HepG2 (cell line): ENCODE measurements at regions of chr10 and their contacts with region 1.

Region 1: DNA sequence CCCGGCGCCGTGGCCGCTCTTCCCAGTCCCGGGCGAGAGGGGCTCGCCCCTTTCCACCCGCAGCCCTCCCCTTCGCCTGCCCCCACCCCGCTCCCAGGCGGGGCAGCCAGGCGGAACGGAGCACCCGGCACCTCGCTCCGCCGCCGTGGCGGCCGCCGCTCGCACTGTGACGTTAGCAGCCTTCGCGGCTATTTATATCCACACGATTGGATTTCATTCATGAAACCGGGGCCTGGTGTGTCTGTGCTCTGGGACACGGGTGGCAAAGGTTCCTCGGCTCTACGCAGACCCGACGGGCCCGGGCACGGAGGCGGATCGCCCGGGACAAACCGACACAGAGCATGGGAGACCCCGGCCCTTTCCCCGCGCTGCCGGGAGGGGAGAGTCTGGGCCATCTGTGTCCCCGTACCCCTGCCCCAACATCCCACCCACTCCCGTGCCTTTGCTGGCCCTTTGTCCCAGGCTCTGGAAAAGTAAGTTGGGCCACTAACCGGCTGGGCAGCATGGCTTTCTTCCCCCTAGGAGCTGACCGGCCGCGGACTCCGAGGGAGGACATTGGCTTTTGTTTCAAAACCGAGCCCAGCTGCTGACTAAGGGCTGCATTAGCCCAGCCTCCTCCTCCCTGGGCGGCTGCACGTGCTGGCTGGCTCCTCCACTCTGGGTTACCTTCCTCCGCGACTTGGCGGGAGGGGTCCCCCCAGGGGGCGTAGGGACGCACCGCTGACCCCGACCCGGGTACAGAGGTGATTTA is at the start of gene RHOBTB1:
- DNase-seq: peak; percentile 34
- ATAC-seq: peak; percentile 84
- H3K4me3 ChIP-seq: peak within 1 kb of the TSS; percentile 59 to 71 (median 69); a peak in 5 of 6 replicates
- H3K27ac ChIP-seq: peak within 1 kb of the TSS; percentile 78
- H3K4me1 ChIP-seq: peaks cover 26% of the 10 kb centered on the region
- H3K27me3 ChIP-seq: no peaks in the 10 kb centered on the region; a peak in 1 of 5 replicates
- CTCF ChIP-seq: no peak
- EP300 ChIP-seq: no peak
- POLR2A ChIP-seq: peak; percentile 34; a peak in 1 of 4 replicates
- RAD21 ChIP-seq: no peak
- total RNA-seq, gene RHOBTB1: 59.5 and 80.6 TPM in 2 replicates

Region 2: GRCh38 chr10:60905580-60905979 is 38.8 kb before region 1 on chr10:
- CTCF ChIA-PET with region 1: no interaction called
- POLR2A ChIA-PET with region 1: no interaction called
- in situ Hi-C with region 1: no loop called
- intact Hi-C with region 1: loop called (anchors 5 kb)
- DNase-seq: no peak
- ATAC-seq: no peak
- H3K4me3 ChIP-seq: no peak overlapping the region
- H3K27ac ChIP-seq: no peak overlapping the region
- H3K4me1 ChIP-seq: peaks cover 39% of the 10 kb centered on the region
- H3K27me3 ChIP-seq: no peaks in the 10 kb centered on the region
- CTCF ChIP-seq: no peak
- EP300 ChIP-seq: no peak
- POLR2A ChIP-seq: no peak
- RAD21 ChIP-seq: no peak